Activated CD8-positive, alpha-beta T cell treated with anti-CD3 and anti-CD28 coated beads for 36 hours (primary cell): ENCODE measurements at regions of chr5 and their contacts with region 1.

Region 1: GRCh38 chr5:151825445-151825844 is 53.7 kb downstream of the G3BP1 start:
- DNase-seq: peak; percentile 46
- ATAC-seq: peak; percentile 51
- H3K4me3 Mint-ChIP-seq: no peak overlapping the region
- H3K27ac Mint-ChIP-seq: no peak overlapping the region
- H3K4me1 Mint-ChIP-seq: peaks cover 3% of the 10 kb centered on the region
- H3K27me3 Mint-ChIP-seq: no peaks in the 10 kb centered on the region
- CTCF ChIP-seq: peak; percentile 88

Region 2: GRCh38 chr5:151815051-151815450 is 10.4 kb before region 1 on chr5:
- CTCF ChIA-PET with region 1: interaction called, 22 read pairs
- POLR2A ChIA-PET with region 1: interaction called, 7 read pairs
- intact Hi-C with region 1: no loop called
- DNase-seq: no peak
- ATAC-seq: no peak
- H3K4me3 Mint-ChIP-seq: no peak overlapping the region
- H3K27ac Mint-ChIP-seq: no peak overlapping the region
- H3K4me1 Mint-ChIP-seq: peaks cover 10% of the 10 kb centered on the region
- H3K27me3 Mint-ChIP-seq: no peaks in the 10 kb centered on the region
- CTCF ChIP-seq: no peak

Region 3: DNA sequence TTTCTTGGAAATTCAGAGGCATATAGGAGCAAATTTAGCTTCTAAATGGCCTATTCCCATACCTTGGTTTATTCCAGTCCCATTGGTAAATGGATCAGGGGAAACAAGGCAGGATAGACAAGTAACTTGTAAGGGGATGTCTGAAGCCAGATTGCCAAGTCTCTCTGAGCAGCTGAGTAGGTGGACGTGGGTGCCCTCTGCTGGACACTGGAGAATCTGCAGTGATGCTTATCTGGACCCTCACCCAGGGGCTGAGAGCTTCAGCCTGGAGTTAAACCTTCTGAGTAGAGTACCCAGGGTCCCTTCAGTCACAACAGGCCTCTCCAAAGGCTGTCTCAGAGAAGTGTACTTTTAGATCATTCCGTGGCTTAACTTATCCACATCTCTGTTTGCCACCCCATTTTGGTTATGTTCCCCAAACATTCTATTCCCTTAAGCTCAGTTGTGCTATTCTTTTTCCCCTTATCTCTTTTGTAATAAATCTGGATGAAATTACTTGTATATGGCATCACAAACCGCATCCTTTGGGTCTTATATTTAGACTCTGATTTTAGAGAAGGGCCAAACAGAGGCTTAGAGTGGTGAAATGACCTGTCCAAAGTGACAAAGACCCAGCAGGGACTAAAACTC is 317.5 kb after region 1 on chr5:
- CTCF ChIA-PET with region 1: interaction called, 112 read pairs
- POLR2A ChIA-PET with region 1: no interaction called
- intact Hi-C with region 1: loop called (anchors 2 kb)
- DNase-seq: peak; percentile 72
- ATAC-seq: peak; percentile 79
- H3K4me3 Mint-ChIP-seq: no peak overlapping the region
- H3K27ac Mint-ChIP-seq: no peak overlapping the region
- H3K4me1 Mint-ChIP-seq: no peaks in the 10 kb centered on the region
- H3K27me3 Mint-ChIP-seq: peaks cover 4% of the 10 kb centered on the region
- CTCF ChIP-seq: peak; percentile 87

Region 4: DNA sequence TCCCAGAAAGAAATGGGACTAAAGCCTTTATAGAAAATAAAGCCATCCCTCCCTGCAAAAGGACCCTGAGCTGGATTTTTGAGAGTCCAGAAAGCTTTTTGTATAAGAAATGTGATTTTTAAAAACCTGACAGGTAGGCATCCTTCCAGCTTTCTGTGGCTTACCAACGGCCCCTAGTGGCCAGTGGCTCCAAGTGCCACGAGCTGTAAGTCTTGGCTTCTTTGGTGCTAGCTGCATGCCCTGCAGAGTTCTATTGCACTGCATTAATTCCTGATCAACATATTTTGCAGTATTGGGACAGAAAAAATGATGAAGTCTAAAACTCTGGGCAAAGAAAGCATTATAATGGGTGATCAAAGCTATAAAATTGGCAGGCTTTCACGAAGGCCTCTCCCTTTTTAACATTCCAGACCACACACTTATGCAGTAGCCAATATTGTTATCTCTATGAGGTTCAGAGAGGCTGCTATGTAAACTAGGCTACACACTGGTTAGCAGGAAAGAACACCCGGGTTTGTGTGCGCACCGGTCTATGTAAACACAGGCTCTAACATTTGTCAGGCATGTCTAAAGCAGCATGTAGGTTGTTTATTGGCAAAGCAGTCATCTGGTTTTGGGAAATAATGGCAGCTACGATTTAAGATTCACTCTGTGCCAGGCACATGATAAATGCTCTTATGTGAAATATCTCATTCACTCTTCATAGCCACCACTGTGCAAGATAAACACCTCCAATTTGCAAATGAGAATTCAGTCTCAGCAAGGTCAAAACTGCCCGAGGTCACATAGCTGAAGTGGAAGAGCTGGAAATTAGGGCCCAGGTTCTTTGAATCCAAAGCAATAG is 524.5 kb after region 1 on chr5:
- CTCF ChIA-PET with region 1: interaction called, 28 read pairs
- POLR2A ChIA-PET with region 1: no interaction called
- intact Hi-C with region 1: loop called (anchors 5 kb)
- DNase-seq: peak; percentile 49
- ATAC-seq: no peak
- H3K4me3 Mint-ChIP-seq: no peak overlapping the region
- H3K27ac Mint-ChIP-seq: no peak overlapping the region
- H3K4me1 Mint-ChIP-seq: no peaks in the 10 kb centered on the region
- H3K27me3 Mint-ChIP-seq: peaks cover 2% of the 10 kb centered on the region
- CTCF ChIP-seq: peak; percentile 74